ENCODE measurements at regions of chr2 and their contacts with region 1.

Region 1: GRCh38 chr2:168738062-168738461 is 64.4 kb upstream of the NOSTRIN start:
- DNase-seq: no peak
- H3K4me3 ChIP-seq: no peak overlapping the region
- H3K27ac ChIP-seq: no peak overlapping the region
- H3K4me1 ChIP-seq: no peaks in the 10 kb centered on the region
- H3K27me3 ChIP-seq: no peaks in the 10 kb centered on the region
- CTCF ChIP-seq: no peak

Region 2: GRCh38 chr2:170255971-170256370 is 1517.9 kb after region 1 on chr2:
- CTCF ChIA-PET with region 1: no interaction called
- POLR2A ChIA-PET with region 1: interaction called, 10 read pairs
- intact Hi-C with region 1: no loop called
- DNase-seq: peak in 1 of 2 experiments; percentile 47
- H3K4me3 ChIP-seq: no peak overlapping the region
- H3K27ac ChIP-seq: no peak overlapping the region
- H3K4me1 ChIP-seq: peaks cover 8% of the 10 kb centered on the region; the same call in 1 of the 2 replicates
- H3K27me3 ChIP-seq: no peaks in the 10 kb centered on the region
- CTCF ChIP-seq: no peak